ENCODE measurements at regions of chr9 and their contacts with region 1.

Region 1: GRCh38 chr9:75455444-75455921 is 367.2 kb downstream of the OSTF1 start:
- DNase-seq: no peak
- ATAC-seq: peak; percentile 65

Region 2: DNA sequence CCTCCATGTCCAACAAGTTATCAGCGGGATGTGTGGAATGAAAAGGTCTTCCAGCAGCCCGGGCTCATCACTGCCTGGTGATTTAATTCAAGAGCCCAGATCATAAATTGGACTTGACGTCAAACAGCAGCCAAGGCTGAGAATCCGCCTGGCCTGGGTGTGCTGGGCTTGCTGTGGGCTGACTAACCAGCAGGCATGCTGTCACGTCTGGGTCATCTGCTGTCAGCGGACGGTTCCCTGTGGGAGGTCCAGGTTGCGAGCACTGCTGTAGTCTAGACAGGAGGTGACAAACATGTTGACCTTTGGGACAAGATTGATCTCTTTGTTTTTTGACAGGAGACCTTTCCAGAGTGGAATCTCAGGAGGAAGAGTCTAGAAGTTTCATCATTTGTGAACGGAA is 77.4 kb before region 1 on chr9:
- intact Hi-C with region 1: loop called in 1 of 2 experiments (anchors 10 kb)
- DNase-seq: peak; percentile 15 to 27
- ATAC-seq: no peak

Measured in left colon (tissue), 2 donors.